ENCODE measurements at regions of chr15 and their contacts with region 1.

Region 1: DNA sequence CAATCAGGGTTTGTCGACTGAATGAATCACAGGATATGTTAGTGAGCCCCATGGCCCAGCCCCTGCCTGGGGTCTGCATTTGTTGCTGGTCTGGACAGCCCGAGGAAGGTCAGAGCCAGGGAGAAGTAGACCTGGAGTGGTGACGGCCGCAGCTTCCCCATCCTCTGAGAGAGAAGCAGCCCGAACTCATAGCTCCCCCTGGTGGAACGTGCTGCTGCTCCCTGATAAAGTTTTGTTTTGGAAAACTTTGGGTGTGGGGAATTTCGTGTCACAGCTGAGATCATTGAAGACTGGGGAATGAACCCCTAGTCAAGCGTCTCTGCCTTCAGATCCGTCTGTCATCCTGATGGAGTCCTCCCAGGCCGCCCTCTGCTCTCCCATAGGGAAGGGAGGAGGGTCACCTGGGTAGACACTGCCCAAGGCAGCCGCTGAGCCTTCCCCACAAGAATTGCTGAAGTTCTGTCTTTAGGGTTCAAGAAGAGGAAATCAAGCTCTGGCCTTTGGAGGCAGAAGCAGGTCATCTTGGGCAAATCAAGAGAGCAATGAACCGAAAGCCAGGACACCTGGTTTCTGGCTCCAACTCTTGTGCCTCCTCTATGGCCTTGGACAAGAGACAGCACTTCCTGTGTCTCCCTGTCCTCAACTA is 60.5 kb downstream of the GLDN start:
- DNase-seq: peak in 1 of 2 experiments; percentile 86
- H3K4me3 ChIP-seq: no peak overlapping the region
- H3K27ac ChIP-seq: no peak overlapping the region
- H3K4me1 ChIP-seq: peaks cover 0 to 8% (median 0%) of the 10 kb centered on the region in 4 experiments; a peak in 2 of 7 replicates
- H3K27me3 ChIP-seq: no peaks in the 10 kb centered on the region
- CTCF ChIP-seq: peak; percentile 83 to 87 (median 84)
- EP300 ChIP-seq: no peak
- POLR2A ChIP-seq: no peak
- RAD21 ChIP-seq: peak; percentile 75 to 80

Region 2: DNA sequence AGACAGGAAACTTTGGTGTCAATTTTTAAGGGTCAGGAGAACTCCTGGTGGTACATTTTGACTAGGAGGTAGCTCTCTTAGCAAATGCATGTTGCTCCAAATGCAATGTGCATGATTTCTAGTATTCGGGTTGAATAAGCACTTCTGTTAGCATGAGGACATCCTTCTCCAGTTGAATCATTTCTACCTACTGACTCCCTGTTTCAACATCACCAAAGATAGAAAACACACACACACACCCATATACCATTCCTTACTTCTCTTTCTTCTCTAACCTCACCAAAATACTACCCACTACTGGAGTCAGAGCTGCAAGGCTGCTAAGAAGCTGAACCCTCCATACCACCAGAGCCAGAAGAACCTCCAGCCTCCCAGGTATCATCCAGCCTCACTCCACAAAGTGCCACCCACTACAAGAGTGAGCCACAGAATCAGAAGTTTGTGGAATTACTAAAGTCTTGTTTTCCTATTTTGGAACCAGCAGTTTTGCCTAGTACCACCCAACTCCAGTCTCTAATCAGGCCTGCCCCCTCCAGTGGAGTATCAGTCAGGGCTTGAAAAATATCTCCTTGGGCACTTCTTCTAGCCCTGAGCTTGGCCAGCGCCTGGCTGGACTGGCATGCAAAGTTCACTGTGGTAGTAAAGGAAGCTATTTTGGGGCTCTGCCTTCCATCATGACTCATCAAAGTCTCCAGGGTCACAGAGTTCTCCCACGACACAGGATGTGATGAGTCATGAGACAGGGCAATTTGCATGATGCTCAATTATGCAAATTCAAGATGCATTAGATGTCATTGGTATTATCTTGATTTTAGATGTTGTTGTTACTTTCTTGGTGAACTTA is 173.8 kb before region 1 on chr15:
- CTCF ChIA-PET with region 1: interaction called, 43 read pairs
- POLR2A ChIA-PET with region 1: no interaction called
- DNase-seq: peak in 1 of 2 experiments; percentile 7
- H3K4me3 ChIP-seq: no peak overlapping the region
- H3K27ac ChIP-seq: no peak overlapping the region
- H3K4me1 ChIP-seq: peaks cover 0 to 4% (median 1%) of the 10 kb centered on the region in 4 experiments; a peak in 2 of 7 replicates
- H3K27me3 ChIP-seq: no peaks in the 10 kb centered on the region
- CTCF ChIP-seq: no peak
- EP300 ChIP-seq: no peak
- POLR2A ChIP-seq: no peak
- RAD21 ChIP-seq: no peak

Region 3: GRCh38 chr15:51267703-51268083 is 134.3 kb before region 1 on chr15:
- CTCF ChIA-PET with region 1: interaction called, 19 read pairs
- POLR2A ChIA-PET with region 1: no interaction called
- DNase-seq: peak in 1 of 2 experiments; percentile 52
- H3K4me3 ChIP-seq: peak overlapping the region; percentile 53 to 69 (median 56)
- H3K27ac ChIP-seq: no peak overlapping the region
- H3K4me1 ChIP-seq: peaks cover 0 to 8% (median 3%) of the 10 kb centered on the region in 4 experiments; a peak in 5 of 7 replicates
- H3K27me3 ChIP-seq: peaks cover 3 to 29% (median 25%) of the 10 kb centered on the region in 4 experiments
- CTCF ChIP-seq: no peak
- EP300 ChIP-seq: no peak
- POLR2A ChIP-seq: no peak
- RAD21 ChIP-seq: no peak

Region 4: DNA sequence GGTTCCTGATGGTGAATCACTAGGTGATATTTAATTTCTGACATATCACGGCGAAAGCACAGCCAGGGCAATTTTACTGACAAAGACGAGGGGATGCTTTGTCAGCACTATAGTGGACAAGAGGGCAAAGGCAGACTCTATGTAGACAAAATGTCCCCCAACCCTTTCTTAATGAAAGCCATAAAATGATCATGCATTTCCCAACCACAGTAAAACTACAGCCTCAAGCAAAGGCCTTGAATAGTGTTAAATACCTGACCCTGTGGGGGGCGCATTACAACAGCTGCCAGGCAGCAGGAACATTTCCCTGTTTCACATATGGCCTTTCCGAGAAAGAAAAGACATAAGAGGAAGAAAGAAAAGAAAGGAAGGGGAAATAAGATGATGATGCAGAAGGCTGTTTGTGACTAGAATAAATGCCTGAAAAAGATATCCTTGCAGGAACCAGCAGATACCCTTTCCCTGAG is 11.0 kb before region 1 on chr15:
- CTCF ChIA-PET with region 1: interaction called, 70 read pairs
- POLR2A ChIA-PET with region 1: no interaction called
- DNase-seq: peak in 1 of 2 experiments; percentile 62
- H3K4me3 ChIP-seq: no peak overlapping the region
- H3K27ac ChIP-seq: no peak overlapping the region
- H3K4me1 ChIP-seq: peaks cover 6 to 14% (median 10%) of the 10 kb centered on the region in 4 experiments; a peak in 6 of 7 replicates
- H3K27me3 ChIP-seq: no peaks in the 10 kb centered on the region
- CTCF ChIP-seq: no peak
- EP300 ChIP-seq: no peak
- POLR2A ChIP-seq: no peak
- RAD21 ChIP-seq: no peak

Region 5: GRCh38 chr15:51499379-51499976 is 97.5 kb after region 1 on chr15:
- CTCF ChIA-PET with region 1: interaction called, 51 read pairs
- POLR2A ChIA-PET with region 1: no interaction called
- DNase-seq: no peak
- H3K4me3 ChIP-seq: no peak overlapping the region
- H3K27ac ChIP-seq: no peak overlapping the region
- H3K4me1 ChIP-seq: no peaks in the 10 kb centered on the region
- H3K27me3 ChIP-seq: no peaks in the 10 kb centered on the region
- CTCF ChIP-seq: peak in 2 of 3 experiments; percentile 63 to 85; a peak in 3 of 4 replicates
- EP300 ChIP-seq: no peak
- POLR2A ChIP-seq: no peak
- RAD21 ChIP-seq: peak; percentile 81 to 83